MCF 10A (cell line): ENCODE measurements at regions of chr1 and their contacts with region 1.

Region 1: DNA sequence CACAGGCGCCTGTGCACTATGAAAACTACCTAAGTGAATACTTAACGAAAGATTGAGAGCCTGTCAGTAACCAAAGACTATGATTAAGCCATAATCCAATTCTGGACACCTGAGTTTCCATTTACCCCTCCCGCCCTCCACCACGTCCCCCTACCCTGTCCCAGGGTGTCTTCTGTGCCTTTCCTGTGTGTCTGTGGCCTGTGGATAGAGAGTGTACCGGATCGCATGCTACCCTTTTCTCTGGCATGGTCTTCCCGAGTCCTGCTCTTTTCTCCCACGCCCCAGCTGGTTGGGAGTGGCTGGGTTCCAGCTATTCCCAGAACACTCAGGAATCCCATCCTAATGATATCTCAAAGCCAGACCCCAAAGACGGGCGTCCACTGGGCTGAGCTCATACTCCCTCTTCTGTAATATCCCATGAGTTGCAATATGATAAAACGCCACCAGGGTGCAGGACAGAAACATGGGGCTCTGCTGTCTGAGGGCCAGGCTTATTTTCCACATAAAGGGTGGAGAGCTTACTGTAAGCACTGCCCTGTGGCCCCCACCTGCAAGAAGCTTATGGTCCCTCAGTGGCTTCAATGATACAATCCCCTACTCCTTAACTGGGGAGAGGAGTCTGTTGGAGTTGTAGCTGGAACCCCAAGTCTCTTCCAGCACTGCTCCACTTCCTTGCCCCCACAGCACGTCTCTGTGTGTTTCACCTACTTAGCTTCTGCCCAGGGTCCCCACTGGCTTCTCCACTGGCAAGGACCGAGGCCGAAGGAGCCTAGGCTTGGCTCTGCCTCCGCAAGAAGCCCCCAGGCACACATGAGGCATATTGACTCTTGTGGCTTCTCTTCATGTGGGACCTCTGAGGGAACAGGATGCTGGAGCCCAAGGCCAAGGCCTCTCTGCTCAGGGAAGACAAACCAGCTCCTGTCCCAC is 17.6 kb upstream of the ALX3 start:
- DNase-seq: peak; percentile 70
- H3K4me3 Mint-ChIP-seq: no peak overlapping the region
- H3K27ac Mint-ChIP-seq: no peak overlapping the region
- H3K4me1 Mint-ChIP-seq: no peaks in the 10 kb centered on the region
- H3K27me3 Mint-ChIP-seq: peaks cover 47% of the 10 kb centered on the region
- CTCF ChIP-seq: peak; percentile 65

Region 2: GRCh38 chr1:110053557-110054428 is 34.3 kb before region 1 on chr1:
- CTCF ChIA-PET with region 1: interaction called, 21 read pairs
- POLR2A ChIA-PET with region 1: interaction called, 3 read pairs
- intact Hi-C with region 1: no loop called
- DNase-seq: peak; percentile 57
- H3K4me3 Mint-ChIP-seq: no peak overlapping the region
- H3K27ac Mint-ChIP-seq: peak overlapping the region; percentile 12
- H3K4me1 Mint-ChIP-seq: peaks cover 2% of the 10 kb centered on the region
- H3K27me3 Mint-ChIP-seq: no peaks in the 10 kb centered on the region
- CTCF ChIP-seq: peak; percentile 87

Region 3: DNA sequence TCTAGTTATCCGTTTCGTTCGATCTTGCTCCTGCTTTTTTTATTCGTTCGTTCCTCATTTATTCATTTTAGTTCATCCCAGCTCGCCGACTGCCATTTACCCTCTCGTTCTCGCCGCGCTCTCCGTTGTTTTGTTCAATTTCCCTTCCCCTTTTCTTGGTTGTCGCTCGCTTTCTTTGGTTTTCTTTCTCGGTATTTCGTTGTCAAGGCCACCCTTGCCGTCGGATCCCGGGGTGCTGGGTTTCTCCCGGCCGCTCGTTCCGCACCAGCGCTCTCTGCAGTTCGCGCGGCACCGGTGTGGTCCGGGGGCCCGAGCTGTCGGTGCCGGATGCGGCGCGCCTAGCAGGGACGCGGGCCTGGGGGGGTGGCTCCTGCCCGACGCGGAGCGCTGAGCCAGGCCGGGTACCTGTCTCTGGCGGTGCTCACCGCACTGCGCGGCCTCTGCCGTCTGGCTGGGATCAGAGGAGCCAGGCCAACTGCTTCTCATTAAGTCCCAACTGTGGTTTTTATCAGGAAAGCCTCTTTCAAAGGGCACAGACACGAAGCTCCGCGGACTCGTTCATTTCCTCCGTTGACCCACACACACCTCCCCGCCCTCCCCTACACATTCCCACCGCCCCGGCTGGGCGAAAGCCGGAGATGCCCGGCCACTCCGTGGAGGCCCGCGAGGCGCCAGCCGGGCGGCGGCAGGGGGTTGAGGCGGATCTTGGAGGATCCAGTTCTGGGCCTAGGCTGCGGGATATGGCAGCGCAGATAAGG is 19.2 kb before region 1 on chr1:
- CTCF ChIA-PET with region 1: interaction called, 12 read pairs
- POLR2A ChIA-PET with region 1: no interaction called
- intact Hi-C with region 1: no loop called
- DNase-seq: no peak
- H3K4me3 Mint-ChIP-seq: no peak overlapping the region
- H3K27ac Mint-ChIP-seq: no peak overlapping the region
- H3K4me1 Mint-ChIP-seq: no peaks in the 10 kb centered on the region
- H3K27me3 Mint-ChIP-seq: no peaks in the 10 kb centered on the region
- CTCF ChIP-seq: no peak

Region 4: DNA sequence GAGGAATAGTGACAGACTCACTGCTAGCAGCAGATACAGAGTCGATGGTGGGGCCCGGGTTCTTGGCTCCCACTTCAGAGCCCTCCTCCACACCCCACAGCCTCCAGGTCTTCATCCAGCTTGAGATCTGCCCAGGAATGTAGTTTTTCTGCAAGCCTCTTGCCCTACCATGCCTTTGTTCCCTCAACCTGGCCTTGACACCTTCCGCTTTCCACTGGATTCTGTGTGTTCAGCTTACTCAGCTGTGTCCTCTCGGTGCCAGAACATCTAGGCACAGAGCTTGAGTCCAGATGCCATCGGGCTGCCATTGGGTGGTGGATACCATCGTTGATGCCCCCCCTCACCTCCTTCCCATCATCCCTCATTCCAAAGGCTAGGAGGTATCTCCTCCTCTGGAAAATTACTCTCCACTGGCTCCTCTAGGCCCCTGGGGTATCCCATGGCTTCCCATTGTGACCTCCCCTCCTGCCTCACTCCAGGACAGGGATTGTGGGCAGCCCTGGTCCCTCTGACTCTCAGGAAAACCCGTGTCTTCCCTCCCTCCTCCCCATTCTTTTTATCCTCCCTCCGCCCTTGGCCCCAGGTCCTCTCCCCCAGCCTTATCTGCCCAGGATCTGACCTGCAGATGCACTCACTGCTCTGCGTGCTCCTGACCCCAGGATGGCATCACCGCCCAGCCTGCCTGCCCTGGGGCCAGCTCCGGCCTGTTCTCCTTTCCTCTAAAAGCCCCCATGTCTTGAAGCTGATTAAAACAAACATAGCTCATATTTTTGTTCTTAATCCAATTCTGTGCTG is 10.0 kb after region 1 on chr1:
- CTCF ChIA-PET with region 1: interaction called, 167 read pairs
- POLR2A ChIA-PET with region 1: no interaction called
- intact Hi-C with region 1: no loop called
- DNase-seq: no peak
- H3K4me3 Mint-ChIP-seq: no peak overlapping the region
- H3K27ac Mint-ChIP-seq: no peak overlapping the region
- H3K4me1 Mint-ChIP-seq: no peaks in the 10 kb centered on the region
- H3K27me3 Mint-ChIP-seq: peaks cover 11% of the 10 kb centered on the region
- CTCF ChIP-seq: no peak

Region 5: GRCh38 chr1:110112656-110113055 is 24.6 kb after region 1 on chr1:
- CTCF ChIA-PET with region 1: interaction called, 167 read pairs
- POLR2A ChIA-PET with region 1: no interaction called
- intact Hi-C with region 1: no loop called
- DNase-seq: no peak
- H3K4me3 Mint-ChIP-seq: no peak overlapping the region
- H3K27ac Mint-ChIP-seq: no peak overlapping the region
- H3K4me1 Mint-ChIP-seq: no peaks in the 10 kb centered on the region
- H3K27me3 Mint-ChIP-seq: peaks cover 84% of the 10 kb centered on the region
- CTCF ChIP-seq: no peak

Region 6: GRCh38 chr1:110449661-110450651 is 361.9 kb after region 1 on chr1:
- CTCF ChIA-PET with region 1: no interaction called
- POLR2A ChIA-PET with region 1: no interaction called
- intact Hi-C with region 1: no loop called
- DNase-seq: no peak
- H3K4me3 Mint-ChIP-seq: no peak overlapping the region
- H3K27ac Mint-ChIP-seq: no peak overlapping the region
- H3K4me1 Mint-ChIP-seq: peaks cover 4% of the 10 kb centered on the region
- H3K27me3 Mint-ChIP-seq: peaks cover 69% of the 10 kb centered on the region
- CTCF ChIP-seq: no peak